ENCODE measurements at regions of chr1 and their contacts with region 1.

Region 1: DNA sequence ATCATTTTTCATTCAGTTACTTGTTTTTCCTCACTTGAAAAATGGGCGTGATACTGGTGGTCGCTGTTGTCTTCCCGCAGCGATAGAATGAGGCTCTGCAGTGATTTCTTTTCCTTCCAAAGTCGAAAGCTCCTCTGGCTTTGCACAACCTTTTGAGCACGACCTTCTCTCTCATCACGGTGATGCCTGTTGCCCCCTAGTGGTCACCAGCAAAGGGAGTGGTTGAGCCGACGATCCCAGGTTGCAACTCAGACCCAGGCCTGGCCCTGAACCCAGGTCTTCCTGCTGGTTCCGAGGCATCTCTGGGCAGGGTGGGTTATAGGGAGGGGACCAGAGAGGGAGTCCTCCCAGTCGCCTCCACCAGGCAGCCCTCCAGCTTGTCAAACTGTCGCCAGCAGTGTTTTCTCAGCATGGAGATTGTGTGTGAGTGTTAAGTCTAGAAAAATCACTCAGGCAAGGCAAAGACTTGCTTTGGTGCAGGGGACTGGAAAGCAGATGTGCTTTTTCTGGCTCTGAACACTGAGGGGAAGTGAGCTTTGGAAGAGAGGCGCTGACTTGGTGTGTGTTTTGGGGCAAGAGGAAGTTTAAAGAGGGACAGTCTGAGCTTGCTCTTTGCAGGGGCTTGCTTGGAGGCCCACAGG is 285.3 kb downstream of the CAMTA1 start:
- DNase-seq: no peak
- H3K4me3 ChIP-seq: peak overlapping the region; percentile 30
- H3K27me3 ChIP-seq: peaks cover 3% of the 10 kb centered on the region; the same call in 1 of the 2 replicates
- CTCF ChIP-seq: peak; percentile 93

Region 2: DNA sequence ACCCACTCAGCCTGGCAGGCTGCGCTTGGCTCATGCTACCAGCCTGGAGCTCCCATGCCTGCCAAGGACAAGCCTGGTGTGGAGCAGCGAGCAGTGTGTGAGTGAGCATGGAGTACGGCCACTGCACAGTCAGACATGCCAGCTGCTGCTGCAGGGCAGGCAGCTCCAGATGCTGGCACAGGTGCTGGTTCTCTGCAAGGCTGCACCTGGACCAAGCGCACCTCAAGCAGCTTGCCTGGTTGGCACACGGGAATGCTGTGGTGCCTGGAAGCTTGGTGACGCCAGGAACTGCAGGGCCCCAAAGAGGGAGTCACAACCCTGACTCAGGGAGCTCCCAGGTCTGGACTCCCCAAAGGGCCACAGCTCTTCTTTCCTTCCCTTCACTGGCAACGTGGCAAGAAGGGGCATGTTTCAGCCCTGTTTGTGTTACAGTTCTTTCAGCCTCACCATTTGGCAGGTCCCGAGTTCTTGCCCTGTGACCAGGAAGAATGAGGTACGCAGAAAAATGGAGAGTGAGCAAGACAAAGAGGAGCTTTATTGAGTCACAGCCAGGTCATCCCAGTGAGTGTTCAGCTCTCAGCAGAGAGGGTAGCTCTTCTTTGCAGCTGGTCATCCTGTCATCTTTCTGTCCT is 703.0 kb before region 1 on chr1:
- CTCF ChIA-PET with region 1: no interaction called
- POLR2A ChIA-PET with region 1: no interaction called
- DNase-seq: no peak
- H3K4me3 ChIP-seq: no peak overlapping the region
- H3K27me3 ChIP-seq: no peaks in the 10 kb centered on the region
- CTCF ChIP-seq: no peak

Region 3: GRCh38 chr1:6727535-6727934 is 343.0 kb before region 1 on chr1:
- CTCF ChIA-PET with region 1: interaction called, 17 read pairs
- POLR2A ChIA-PET with region 1: no interaction called
- DNase-seq: no peak
- H3K4me3 ChIP-seq: no peak overlapping the region
- H3K27me3 ChIP-seq: no peaks in the 10 kb centered on the region
- CTCF ChIP-seq: peak; percentile 87

Region 4: DNA sequence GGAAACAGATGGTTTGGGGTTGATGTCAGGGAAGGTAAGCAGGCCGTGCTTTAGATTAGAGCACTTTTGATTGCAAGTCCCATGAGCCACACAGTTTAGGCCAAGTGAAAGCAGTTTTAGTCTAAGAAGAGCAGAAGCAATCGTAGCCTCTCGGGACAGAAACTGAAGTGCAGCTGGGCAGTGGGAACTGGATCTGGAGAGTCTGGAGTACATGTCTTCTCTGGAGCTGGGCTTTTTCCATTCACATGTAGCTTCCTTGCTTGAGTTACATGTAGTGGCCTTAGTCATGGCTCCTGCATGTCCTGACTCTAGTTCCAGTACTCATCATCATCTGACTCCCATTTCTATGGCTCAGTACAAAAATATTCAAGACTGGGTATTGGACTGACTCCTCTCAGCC is 268.5 kb before region 1 on chr1:
- CTCF ChIA-PET with region 1: interaction called, 11 read pairs
- POLR2A ChIA-PET with region 1: no interaction called
- DNase-seq: no peak
- H3K4me3 ChIP-seq: no peak overlapping the region
- H3K27me3 ChIP-seq: no peaks in the 10 kb centered on the region
- CTCF ChIP-seq: no peak

Region 5: DNA sequence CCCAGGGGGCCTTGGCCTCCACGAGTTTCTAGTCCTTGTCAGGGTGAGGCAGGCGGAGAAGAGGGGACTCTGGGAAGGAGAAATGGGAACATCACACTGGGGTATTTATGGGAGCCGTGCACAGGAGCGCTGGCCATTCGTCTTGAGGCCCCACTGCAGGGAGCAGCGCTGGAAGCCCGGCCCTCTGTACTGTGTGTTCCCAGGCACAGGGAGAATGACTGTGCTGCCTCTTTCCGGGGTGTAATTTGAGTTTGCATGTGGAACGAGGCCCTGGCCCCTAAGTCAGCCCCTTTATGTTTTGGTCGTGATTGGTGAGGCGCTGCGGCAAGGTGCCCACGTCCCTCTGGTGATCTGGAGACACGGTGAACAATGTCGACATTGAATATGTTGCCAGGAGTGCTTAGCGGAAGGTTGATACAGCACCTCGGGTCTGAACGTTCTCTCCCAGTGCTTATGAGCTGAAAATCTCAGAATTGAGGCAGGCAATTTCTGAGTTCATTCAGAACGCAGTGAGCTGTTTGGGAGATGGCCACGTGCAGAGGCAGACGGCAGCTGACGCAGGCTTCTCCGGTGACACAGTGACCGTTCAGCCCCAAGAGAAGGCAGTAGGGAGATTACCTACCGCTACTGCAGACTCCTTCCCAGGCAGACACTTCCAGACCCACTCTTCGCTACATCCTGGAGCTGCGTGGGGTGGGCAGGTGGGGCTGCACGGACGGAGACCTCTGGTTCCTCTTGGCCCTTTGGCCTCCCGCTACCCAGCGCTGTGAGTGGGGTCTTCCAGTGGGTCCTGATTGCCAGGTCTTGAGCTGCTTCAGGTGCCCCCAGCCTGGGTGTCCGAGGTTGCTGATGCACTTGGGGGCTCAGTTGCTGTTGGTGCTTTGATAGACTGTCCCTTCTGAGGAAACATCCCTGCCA is 19.5 kb before region 1 on chr1:
- CTCF ChIA-PET with region 1: interaction called, 15 read pairs
- POLR2A ChIA-PET with region 1: no interaction called
- DNase-seq: no peak
- H3K4me3 ChIP-seq: no peak overlapping the region
- H3K27me3 ChIP-seq: no peaks in the 10 kb centered on the region; the same call in 1 of the 2 replicates
- CTCF ChIP-seq: no peak

Region 6: GRCh38 chr1:7186382-7187109 is 116.0 kb after region 1 on chr1:
- CTCF ChIA-PET with region 1: no interaction called
- POLR2A ChIA-PET with region 1: no interaction called
- DNase-seq: no peak
- H3K4me3 ChIP-seq: no peak overlapping the region
- H3K27me3 ChIP-seq: no peaks in the 10 kb centered on the region; the same call in 1 of the 2 replicates
- CTCF ChIP-seq: no peak

Region 7: GRCh38 chr1:7313081-7313546 is 242.6 kb after region 1 on chr1:
- CTCF ChIA-PET with region 1: no interaction called
- POLR2A ChIA-PET with region 1: no interaction called
- DNase-seq: no peak
- H3K4me3 ChIP-seq: no peak overlapping the region
- H3K27me3 ChIP-seq: no peaks in the 10 kb centered on the region
- CTCF ChIP-seq: no peak

Region 8: GRCh38 chr1:7646981-7647901 is 576.7 kb after region 1 on chr1:
- CTCF ChIA-PET with region 1: interaction called, 13 read pairs
- POLR2A ChIA-PET with region 1: no interaction called
- DNase-seq: no peak
- H3K4me3 ChIP-seq: no peak overlapping the region
- H3K27me3 ChIP-seq: peaks cover 2% of the 10 kb centered on the region
- CTCF ChIP-seq: peak; percentile 94